HepG2 (cell line): ENCODE measurements at regions of chr2 and their contacts with region 1.

Region 1: GRCh38 chr2:85538486-85539360 is at the start of gene MAT2A:
- DNase-seq: peak; percentile 91
- ATAC-seq: peak; percentile 83
- H3K4me3 ChIP-seq: peak within 1 kb of the TSS; percentile 81 to 96 (median 95)
- H3K27ac ChIP-seq: peak within 1 kb of the TSS; percentile 99
- H3K4me1 ChIP-seq: peaks cover 44% of the 10 kb centered on the region
- H3K27me3 ChIP-seq: no peaks in the 10 kb centered on the region; a peak in 1 of 5 replicates
- CTCF ChIP-seq: peak; percentile 97
- EP300 ChIP-seq: peak; percentile 3 to 58; a peak in 1 of 4 replicates
- POLR2A ChIP-seq: peak; percentile 99 to 100
- RAD21 ChIP-seq: peak; percentile 86
- total RNA-seq, gene MAT2A: 55.8 and 155 TPM in 2 replicates

Region 2: GRCh38 chr2:85390941-85391669 is 147.6 kb before region 1 on chr2:
- CTCF ChIA-PET with region 1: no interaction called
- POLR2A ChIA-PET with region 1: interaction called, 10 read pairs
- in situ Hi-C with region 1: no loop called
- intact Hi-C with region 1: no loop called
- DNase-seq: peak; percentile 59
- ATAC-seq: peak; percentile 92
- H3K4me3 ChIP-seq: no peak overlapping the region
- H3K27ac ChIP-seq: no peak overlapping the region
- H3K4me1 ChIP-seq: no peaks in the 10 kb centered on the region
- H3K27me3 ChIP-seq: no peaks in the 10 kb centered on the region
- CTCF ChIP-seq: peak; percentile 98
- EP300 ChIP-seq: no peak
- POLR2A ChIP-seq: no peak
- RAD21 ChIP-seq: peak; percentile 98

Region 3: GRCh38 chr2:85430752-85431569 is 107.8 kb before region 1 on chr2:
- CTCF ChIA-PET with region 1: no interaction called
- POLR2A ChIA-PET with region 1: interaction called, 32 read pairs
- in situ Hi-C with region 1: no loop called
- intact Hi-C with region 1: no loop called
- DNase-seq: no peak
- ATAC-seq: no peak
- H3K4me3 ChIP-seq: no peak overlapping the region
- H3K27ac ChIP-seq: no peak overlapping the region
- H3K4me1 ChIP-seq: peaks cover 38% of the 10 kb centered on the region
- H3K27me3 ChIP-seq: peaks cover 10 to 66% of the 10 kb centered on the region in 2 experiments
- CTCF ChIP-seq: no peak
- EP300 ChIP-seq: no peak
- POLR2A ChIP-seq: no peak
- RAD21 ChIP-seq: no peak

Region 4: GRCh38 chr2:85468704-85469349 is 69.9 kb before region 1 on chr2:
- CTCF ChIA-PET with region 1: no interaction called
- POLR2A ChIA-PET with region 1: interaction called, 109 read pairs
- in situ Hi-C with region 1: no loop called
- intact Hi-C with region 1: loop called (anchors 1 kb)
- DNase-seq: peak; percentile 97
- ATAC-seq: peak; percentile 80
- H3K4me3 ChIP-seq: peak overlapping the region in 2 of 3 experiments; percentile 29 to 44; a peak in 4 of 6 replicates
- H3K27ac ChIP-seq: peak overlapping the region; percentile 70
- H3K4me1 ChIP-seq: peaks cover 67% of the 10 kb centered on the region
- H3K27me3 ChIP-seq: no peaks in the 10 kb centered on the region
- CTCF ChIP-seq: peak; percentile 53
- EP300 ChIP-seq: 0 out of 4 replicates have a peak, but pooled peaks of 1 of the 2 experiments have one; percentile 43
- POLR2A ChIP-seq: no peak
- RAD21 ChIP-seq: peak; percentile 24; the same call in 1 of the 2 replicates

Region 5: GRCh38 chr2:85524336-85524933 is 14.3 kb before region 1 on chr2:
- CTCF ChIA-PET with region 1: no interaction called
- POLR2A ChIA-PET with region 1: interaction called, 55 read pairs
- in situ Hi-C with region 1: no loop called
- intact Hi-C with region 1: no loop called
- DNase-seq: no peak
- ATAC-seq: peak; percentile 89
- H3K4me3 ChIP-seq: peak overlapping the region in 2 of 3 experiments; percentile 4 to 8; a peak in 2 of 6 replicates
- H3K27ac ChIP-seq: no peak overlapping the region
- H3K4me1 ChIP-seq: peaks cover 29% of the 10 kb centered on the region
- H3K27me3 ChIP-seq: peaks cover 2 to 14% of the 10 kb centered on the region in 2 experiments; a peak in 3 of 5 replicates
- CTCF ChIP-seq: no peak
- EP300 ChIP-seq: no peak
- POLR2A ChIP-seq: no peak
- RAD21 ChIP-seq: no peak

Region 6: GRCh38 chr2:85589982-85590791 is 51.5 kb after region 1 on chr2:
- CTCF ChIA-PET with region 1: no interaction called
- POLR2A ChIA-PET with region 1: interaction called, 41 read pairs
- in situ Hi-C with region 1: no loop called
- intact Hi-C with region 1: no loop called
- DNase-seq: peak; percentile 82
- ATAC-seq: peak; percentile 56
- H3K4me3 ChIP-seq: peak overlapping the region in 1 of 3 experiments; percentile 29; a peak in 2 of 6 replicates
- H3K27ac ChIP-seq: no peak overlapping the region
- H3K4me1 ChIP-seq: peaks cover 95% of the 10 kb centered on the region
- H3K27me3 ChIP-seq: no peaks in the 10 kb centered on the region
- CTCF ChIP-seq: peak; percentile 34
- EP300 ChIP-seq: peak in 1 of 2 experiments; percentile 73; a peak in 1 of 4 replicates
- POLR2A ChIP-seq: peak; percentile 34 to 45; a peak in 2 of 4 replicates
- RAD21 ChIP-seq: no peak; the same call in 1 of the 2 replicates